Gastrocnemius medialis (tissue), 4 donors: ENCODE measurements at regions of chrX and their contacts with region 1.

Region 1: DNA sequence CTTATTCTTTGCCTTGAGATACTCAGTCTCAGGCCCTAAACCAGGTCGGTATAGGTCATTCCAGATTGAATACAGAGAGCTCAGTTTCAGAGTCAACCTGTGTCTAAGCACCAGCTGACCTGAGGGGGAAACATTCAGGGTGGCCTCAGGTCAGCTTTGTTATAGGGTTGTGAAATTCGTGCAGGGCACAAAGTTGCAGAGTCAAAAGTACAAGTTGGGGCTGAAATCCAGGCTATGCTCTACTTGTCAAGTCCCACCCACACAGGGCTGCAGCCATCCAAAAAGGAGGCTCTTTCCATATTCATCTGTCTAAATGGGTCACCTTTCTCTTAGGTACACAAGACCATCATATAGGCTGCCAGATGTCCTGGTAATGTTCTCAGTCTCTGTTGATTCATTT is 89.7 kb downstream of the ITIH6 start:
- DNase-seq: peak; percentile 1 to 30
- ATAC-seq: peak in 1 of 2 donors; percentile 87
- H3K4me3 ChIP-seq: no peak overlapping the region
- H3K27ac ChIP-seq: no peak overlapping the region
- H3K4me1 ChIP-seq: peaks cover 3 to 4% of the 10 kb centered on the region in 2 donors
- H3K27me3 ChIP-seq: no peaks in the 10 kb centered on the region
- CTCF ChIP-seq: no peak
- POLR2A ChIP-seq: no peak

Region 2: DNA sequence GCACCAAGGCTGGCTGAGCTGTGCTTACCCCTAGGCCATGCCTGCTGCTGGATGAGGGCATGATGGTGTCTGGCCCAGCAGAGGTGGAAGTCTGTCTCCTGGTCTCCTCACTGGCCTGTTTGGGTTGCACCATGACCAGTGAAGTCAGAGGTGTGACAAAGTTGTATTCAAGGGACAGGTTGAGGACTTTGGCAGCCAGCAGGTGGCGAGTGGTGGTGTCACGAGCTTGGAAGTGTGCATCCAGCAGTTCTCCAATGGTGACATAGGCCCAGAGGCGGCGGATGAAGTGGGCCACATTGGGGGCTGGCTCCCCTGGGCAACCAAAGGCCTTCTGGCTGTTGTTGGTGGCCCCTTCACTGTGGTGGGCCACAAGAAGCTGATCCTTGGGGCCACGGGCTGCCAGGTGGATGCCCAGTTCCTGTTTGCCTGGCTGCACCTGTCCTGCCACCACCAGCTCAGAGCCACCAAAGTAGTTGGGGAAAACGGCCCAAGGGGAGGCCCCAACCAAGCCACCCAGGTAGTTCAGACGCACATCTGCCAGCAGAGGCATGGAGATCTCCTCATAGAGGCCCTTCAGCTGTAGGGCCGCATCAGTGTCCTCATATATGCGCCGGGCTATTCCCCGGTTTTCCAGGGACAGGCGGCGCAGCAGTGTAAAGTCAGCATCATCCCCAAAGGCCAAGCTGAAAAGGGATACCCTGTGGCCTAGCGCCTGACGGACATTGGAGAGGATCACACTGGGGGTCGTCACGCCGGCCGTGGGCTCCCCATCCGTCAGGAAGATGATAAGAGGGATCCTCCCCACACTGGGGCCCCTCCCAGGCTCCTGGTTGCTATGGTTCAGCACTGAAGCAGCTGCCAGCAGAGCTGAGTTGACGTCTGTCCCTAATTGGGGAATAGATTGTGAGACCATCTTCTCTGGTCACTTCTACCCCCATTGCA is 50.0 kb after region 1 on chrX:
- in situ Hi-C with region 1: no loop called
- intact Hi-C with region 1: loop called (anchors 10 kb)
- DNase-seq: peak in 1 of 2 donors; percentile 52
- ATAC-seq: peak in 1 of 2 donors; percentile 68
- H3K4me3 ChIP-seq: no peak overlapping the region
- H3K27ac ChIP-seq: peak overlapping the region; percentile 14 to 67 (median 54)
- H3K4me1 ChIP-seq: peaks cover 11 to 23% of the 10 kb centered on the region in 2 donors
- H3K27me3 ChIP-seq: no peaks in the 10 kb centered on the region
- CTCF ChIP-seq: no peak
- POLR2A ChIP-seq: no peak

Region 3: GRCh38 chrX:54786962-54787361 is 78.6 kb after region 1 on chrX:
- in situ Hi-C with region 1: no loop called
- intact Hi-C with region 1: no loop called
- DNase-seq: no peak
- ATAC-seq: peak; percentile 34 to 53
- H3K4me3 ChIP-seq: no peak overlapping the region
- H3K27ac ChIP-seq: no peak overlapping the region
- H3K4me1 ChIP-seq: peaks cover 0 to 4% of the 10 kb centered on the region in 2 donors
- H3K27me3 ChIP-seq: no peaks in the 10 kb centered on the region
- CTCF ChIP-seq: peak in 3 of 5 experiments; percentile 28 to 34 (median 34)
- POLR2A ChIP-seq: no peak